Heart left ventricle (tissue), 16 donors: ENCODE measurements at regions of chrX and their contacts with region 1.

Region 1: DNA sequence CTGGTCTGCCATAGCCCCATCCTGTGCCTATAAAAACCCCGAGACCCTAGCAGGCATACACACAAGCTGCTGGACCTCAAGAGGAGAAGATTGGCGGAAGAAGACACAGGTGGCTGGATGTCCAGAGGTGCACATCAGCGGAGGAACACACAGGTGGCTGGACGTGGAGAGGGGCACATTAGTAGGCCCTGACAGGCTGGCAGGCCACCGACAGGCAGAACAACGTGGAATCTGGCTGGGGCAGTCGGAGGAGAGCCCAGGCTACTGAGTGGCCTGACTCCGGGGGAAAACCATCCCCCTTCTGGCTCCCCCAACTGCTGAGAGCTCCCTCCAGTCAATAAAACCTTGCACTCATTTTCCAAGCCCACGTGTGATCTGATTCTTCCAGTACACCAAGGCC is 512.5 kb upstream of the AMOT start:
- DNase-seq: no peak
- ATAC-seq: no peak
- H3K4me3 ChIP-seq: no peak overlapping the region
- H3K27ac ChIP-seq: no peak overlapping the region
- H3K4me1 ChIP-seq: no peaks in the 10 kb centered on the region
- H3K27me3 ChIP-seq: no peaks in the 10 kb centered on the region
- CTCF ChIP-seq: no peak
- POLR2A ChIP-seq: no peak

Region 2: GRCh38 chrX:112760697-112761096 is 592.4 kb before region 1 on chrX:
- intact Hi-C with region 1: no loop called
- DNase-seq: no peak
- ATAC-seq: no peak
- H3K4me3 ChIP-seq: no peak overlapping the region
- H3K27ac ChIP-seq: no peak overlapping the region
- H3K4me1 ChIP-seq: peaks cover 0 to 7% (median 0%) of the 10 kb centered on the region in 12 donors
- H3K27me3 ChIP-seq: peaks cover 0 to 18% (median 0%) of the 10 kb centered on the region in 9 donors
- CTCF ChIP-seq: no peak
- POLR2A ChIP-seq: no peak

Region 3: DNA sequence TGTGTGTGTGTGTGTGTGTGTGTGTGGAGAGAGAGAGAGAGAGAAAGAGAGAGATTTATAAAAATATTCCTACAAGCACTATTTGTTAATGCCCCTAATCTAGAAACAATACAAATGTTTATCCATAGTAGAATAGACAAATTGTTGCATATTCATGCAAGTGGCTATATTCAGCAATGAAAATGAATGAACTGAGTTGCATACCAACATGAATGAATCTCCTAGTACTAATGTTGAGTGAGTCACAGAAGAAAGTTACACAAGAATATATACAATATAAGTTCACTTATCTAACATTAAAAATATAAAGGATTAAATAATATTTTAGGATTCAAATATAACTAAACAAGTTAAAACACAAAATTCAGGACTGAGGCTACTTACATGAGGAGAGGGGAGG is 55.7 kb before region 1 on chrX:
- intact Hi-C with region 1: loop called in 1 of 10 experiments (anchors 10 kb)
- DNase-seq: no peak
- ATAC-seq: no peak
- H3K4me3 ChIP-seq: no peak overlapping the region
- H3K27ac ChIP-seq: no peak overlapping the region
- H3K4me1 ChIP-seq: no peaks in the 10 kb centered on the region
- H3K27me3 ChIP-seq: no peaks in the 10 kb centered on the region
- CTCF ChIP-seq: no peak
- POLR2A ChIP-seq: no peak